CD4-positive, alpha-beta memory T cell (primary cell): ENCODE measurements at regions of chr14 and their contacts with region 1.

Region 1: DNA sequence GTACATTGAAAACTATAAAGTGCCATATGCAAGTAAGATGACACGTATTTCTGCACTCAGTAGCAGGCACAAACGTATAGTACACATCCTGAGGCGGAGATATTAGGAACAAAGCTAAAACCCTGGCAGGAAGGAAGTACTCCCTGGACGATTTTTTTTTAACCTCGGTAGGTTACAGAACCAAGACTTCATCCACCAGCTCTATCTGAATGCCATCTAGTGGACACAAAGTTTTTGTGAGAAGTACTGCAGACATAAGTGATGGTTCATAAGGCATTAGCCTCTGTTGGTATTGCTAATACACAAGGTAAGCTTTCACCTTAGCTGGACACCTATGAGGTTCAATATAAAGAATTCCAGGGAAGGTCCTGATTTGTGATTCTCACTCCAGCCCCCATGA is 83.0 kb upstream of the CCDC196 start:
- DNase-seq: peak in 4 of 5 donors; percentile 7 to 10 (median 9)
- H3K4me3 ChIP-seq: no peak overlapping the region
- H3K4me3 Mint-ChIP-seq: peak overlapping the region in 2 of 8 donors; percentile 8 to 9
- H3K27ac ChIP-seq: no peak overlapping the region
- H3K27ac Mint-ChIP-seq: no peak overlapping the region
- H3K4me1 ChIP-seq: peaks cover 11% of the 10 kb centered on the region
- H3K4me1 Mint-ChIP-seq: peaks cover 0 to 7% (median 0%) of the 10 kb centered on the region in 4 donors
- H3K27me3 ChIP-seq: no peaks in the 10 kb centered on the region
- H3K27me3 Mint-ChIP-seq: no peaks in the 10 kb centered on the region

Region 2: DNA sequence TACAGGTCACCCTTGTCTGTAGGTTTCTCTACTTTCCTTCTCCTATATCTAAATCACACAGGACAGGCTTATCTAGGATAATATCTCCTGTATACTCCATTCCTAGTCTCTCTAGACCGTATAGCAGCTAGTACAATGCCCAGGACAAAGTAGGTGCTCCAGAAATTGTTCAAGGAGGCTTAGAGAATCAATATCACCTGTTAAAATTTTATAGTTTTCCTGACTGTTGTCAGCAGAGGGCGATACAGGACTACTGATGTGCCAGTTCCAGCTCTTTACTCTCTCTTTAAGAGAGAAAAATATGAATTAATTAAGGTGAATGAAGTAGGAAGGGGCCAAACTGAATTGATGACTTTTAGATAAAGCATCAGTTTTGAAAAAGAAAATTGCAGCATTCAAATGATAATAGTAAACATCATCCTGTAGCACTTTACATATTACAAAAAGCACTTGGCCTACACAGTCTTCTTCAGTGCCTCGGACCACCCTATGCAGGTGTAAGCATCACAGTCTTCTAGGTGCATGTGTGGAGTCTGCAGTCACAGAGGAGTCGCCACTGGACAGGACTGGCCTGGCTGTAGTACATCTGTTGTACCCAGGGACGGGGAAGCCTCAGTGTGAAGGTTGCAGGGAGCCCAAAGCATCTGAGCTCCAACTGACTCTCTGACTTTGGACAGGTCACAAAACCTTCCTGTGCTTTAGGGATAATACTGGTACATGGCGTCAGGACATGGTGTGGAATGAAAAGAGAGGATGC is 1238.9 kb before region 1 on chr14:
- CTCF ChIA-PET with region 1: no interaction called
- POLR2A ChIA-PET with region 1: no interaction called
- intact Hi-C with region 1: loop called (anchors 10 kb)
- DNase-seq: peak in 4 of 5 donors; percentile 57 to 64 (median 59)
- H3K4me3 ChIP-seq: no peak overlapping the region
- H3K4me3 Mint-ChIP-seq: no peak overlapping the region
- H3K27ac ChIP-seq: no peak overlapping the region
- H3K27ac Mint-ChIP-seq: no peak overlapping the region
- H3K4me1 ChIP-seq: no peaks in the 10 kb centered on the region
- H3K4me1 Mint-ChIP-seq: peaks cover 0 to 7% (median 5%) of the 10 kb centered on the region in 4 donors
- H3K27me3 ChIP-seq: no peaks in the 10 kb centered on the region
- H3K27me3 Mint-ChIP-seq: no peaks in the 10 kb centered on the region

Region 3: DNA sequence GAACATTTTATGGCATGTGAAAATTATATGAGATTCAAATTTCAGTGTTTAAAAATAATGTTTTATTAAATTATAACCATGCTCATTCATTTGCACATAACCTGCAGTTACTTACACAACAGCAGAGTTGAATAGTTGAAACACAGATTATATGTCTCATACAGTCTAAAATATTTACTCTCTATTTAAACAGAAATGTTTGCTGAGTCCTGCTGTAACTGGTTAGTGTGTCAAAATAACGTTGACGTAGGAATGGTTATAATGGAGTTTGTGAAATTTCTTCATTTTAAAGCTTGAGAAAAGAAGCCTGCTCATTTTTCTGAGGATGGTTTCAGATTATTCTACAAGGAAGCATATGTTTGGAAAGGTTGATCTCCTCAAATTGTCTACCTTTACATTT is 589.6 kb after region 1 on chr14:
- CTCF ChIA-PET with region 1: no interaction called
- POLR2A ChIA-PET with region 1: no interaction called
- intact Hi-C with region 1: no loop called
- DNase-seq: no peak
- H3K4me3 ChIP-seq: no peak overlapping the region
- H3K4me3 Mint-ChIP-seq: no peak overlapping the region
- H3K27ac ChIP-seq: no peak overlapping the region
- H3K27ac Mint-ChIP-seq: no peak overlapping the region
- H3K4me1 ChIP-seq: no peaks in the 10 kb centered on the region
- H3K4me1 Mint-ChIP-seq: no peaks in the 10 kb centered on the region
- H3K27me3 ChIP-seq: no peaks in the 10 kb centered on the region
- H3K27me3 Mint-ChIP-seq: no peaks in the 10 kb centered on the region